CD8-positive, alpha-beta T cell (primary cell): ENCODE measurements at regions of chr6 and their contacts with region 1.

Region 1: DNA sequence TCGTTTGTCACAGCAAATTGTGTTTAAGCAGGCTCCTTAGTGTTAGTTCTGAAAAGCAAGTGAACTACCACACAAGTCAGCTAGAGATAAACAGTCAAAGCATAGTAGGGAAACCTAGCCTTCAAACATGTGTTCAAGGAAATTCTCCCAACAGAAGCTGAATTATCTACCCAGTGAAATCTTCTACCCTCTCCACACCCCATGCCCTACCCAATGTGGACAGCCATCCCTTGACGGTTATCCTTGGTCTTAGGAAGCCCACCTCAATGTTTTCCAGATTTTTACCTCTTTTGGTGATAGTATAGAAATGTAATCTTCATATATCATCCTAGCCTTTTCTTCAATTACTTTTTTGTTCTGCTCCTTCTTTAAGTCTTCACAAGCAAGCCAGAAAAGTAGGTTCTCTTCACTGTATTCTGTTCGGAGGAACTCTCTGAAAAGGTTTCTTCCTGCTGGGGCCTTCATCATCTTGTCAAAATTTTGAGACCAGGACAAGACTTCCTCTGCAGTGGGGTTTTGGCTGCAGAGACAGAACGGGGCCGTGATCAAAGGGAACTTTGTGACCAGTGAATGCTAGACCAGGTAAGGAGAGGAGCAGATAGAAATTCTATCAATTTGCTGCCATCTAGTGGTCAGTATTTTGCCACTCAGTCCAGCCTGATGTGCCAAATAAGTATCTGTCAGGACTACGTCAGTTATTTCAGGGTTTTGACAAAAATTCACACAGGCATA is 21.6 kb upstream of the MTRF1L start:
- DNase-seq: peak in 8 of 9 experiments; percentile 6 to 76 (median 38)
- ATAC-seq: peak; percentile 77
- H3K4me3 ChIP-seq: no peak overlapping the region
- H3K4me3 Mint-ChIP-seq: no peak overlapping the region
- H3K27ac ChIP-seq: no peak overlapping the region
- H3K27ac Mint-ChIP-seq: no peak overlapping the region
- H3K4me1 ChIP-seq: no peaks in the 10 kb centered on the region
- H3K4me1 Mint-ChIP-seq: no peaks in the 10 kb centered on the region
- H3K27me3 ChIP-seq: no peaks in the 10 kb centered on the region
- H3K27me3 Mint-ChIP-seq: peaks cover 22% of the 10 kb centered on the region
- CTCF ChIP-seq: peak; percentile 74

Region 2: DNA sequence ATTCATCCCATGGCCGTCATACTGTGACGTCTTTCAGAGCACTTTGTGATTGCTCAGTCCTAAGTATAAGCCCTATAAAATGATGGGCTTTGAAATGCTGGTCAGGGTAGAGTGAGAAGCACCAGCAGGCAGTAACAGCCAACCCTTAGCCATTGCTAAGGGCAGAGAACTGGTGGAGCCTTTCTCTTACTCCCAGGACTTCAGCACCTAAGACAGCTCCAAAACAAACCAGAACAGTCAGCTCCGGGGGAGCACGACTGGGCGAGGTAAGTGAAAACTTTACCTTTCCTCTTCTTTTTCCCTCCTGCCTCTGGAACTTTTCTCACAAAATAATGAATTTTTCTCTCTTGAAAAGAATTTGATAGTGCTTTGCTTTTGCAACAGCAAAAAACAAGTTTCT is 273.4 kb before region 1 on chr6 and contains the start of gene VIP:
- CTCF ChIA-PET with region 1: no interaction called
- POLR2A ChIA-PET with region 1: no interaction called
- intact Hi-C with region 1: loop called in 1 of 2 experiments (anchors 5 kb)
- DNase-seq: no peak
- ATAC-seq: no peak
- H3K4me3 ChIP-seq: no peak within 1 kb of the TSS
- H3K4me3 Mint-ChIP-seq: no peak within 1 kb of the TSS
- H3K27ac ChIP-seq: no peak within 1 kb of the TSS
- H3K27ac Mint-ChIP-seq: no peak within 1 kb of the TSS
- H3K4me1 ChIP-seq: no peaks in the 10 kb centered on the region
- H3K4me1 Mint-ChIP-seq: no peaks in the 10 kb centered on the region
- H3K27me3 ChIP-seq: no peaks in the 10 kb centered on the region
- H3K27me3 Mint-ChIP-seq: no peaks in the 10 kb centered on the region
- CTCF ChIP-seq: no peak
- total RNA-seq, gene VIP: not detected

Region 3: GRCh38 chr6:152863618-152864326 is 160.4 kb before region 1 on chr6:
- CTCF ChIA-PET with region 1: interaction called, 8 read pairs
- POLR2A ChIA-PET with region 1: no interaction called
- intact Hi-C with region 1: loop called (anchors 1 kb)
- DNase-seq: peak; percentile 10 to 74 (median 67)
- ATAC-seq: peak; percentile 57
- H3K4me3 ChIP-seq: no peak overlapping the region
- H3K4me3 Mint-ChIP-seq: no peak overlapping the region
- H3K27ac ChIP-seq: no peak overlapping the region
- H3K27ac Mint-ChIP-seq: no peak overlapping the region
- H3K4me1 ChIP-seq: no peaks in the 10 kb centered on the region
- H3K4me1 Mint-ChIP-seq: no peaks in the 10 kb centered on the region
- H3K27me3 ChIP-seq: no peaks in the 10 kb centered on the region
- H3K27me3 Mint-ChIP-seq: peaks cover 6% of the 10 kb centered on the region
- CTCF ChIP-seq: peak; percentile 70

Region 4: DNA sequence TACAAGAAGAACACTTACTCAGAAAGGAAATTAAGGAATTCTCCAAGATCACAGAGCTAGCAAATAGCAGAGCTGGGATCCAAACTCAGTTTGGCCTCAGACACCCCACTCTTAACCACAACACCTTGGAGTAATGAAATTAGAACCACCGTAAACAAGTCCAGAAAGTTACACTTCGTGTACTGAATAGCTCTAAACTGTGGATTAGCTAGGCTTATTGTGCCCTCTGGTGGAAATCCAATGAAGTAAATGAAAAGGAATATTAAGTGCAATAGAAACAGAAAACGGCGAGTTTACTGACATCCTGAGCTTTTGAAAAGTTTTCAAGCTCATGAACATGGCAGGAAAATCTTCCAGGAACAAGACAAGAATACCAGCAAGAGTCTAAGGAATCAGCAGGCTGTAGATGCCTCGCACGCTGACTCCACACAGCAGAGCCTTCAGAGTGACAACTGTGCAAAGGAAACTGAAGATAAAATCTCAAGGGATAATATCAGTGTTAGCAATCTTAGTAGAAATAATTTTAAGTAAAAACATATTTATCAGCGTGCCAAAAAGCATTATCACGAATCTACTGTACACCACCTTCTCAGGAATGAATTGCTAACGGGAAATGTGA is 75.9 kb before region 1 on chr6:
- CTCF ChIA-PET with region 1: interaction called, 3 read pairs
- POLR2A ChIA-PET with region 1: no interaction called
- intact Hi-C with region 1: loop called (anchors 1 to 5 kb)
- DNase-seq: peak in 2 of 9 experiments; percentile 44 to 56
- ATAC-seq: peak; percentile 52
- H3K4me3 ChIP-seq: no peak overlapping the region
- H3K4me3 Mint-ChIP-seq: no peak overlapping the region
- H3K27ac ChIP-seq: no peak overlapping the region
- H3K27ac Mint-ChIP-seq: no peak overlapping the region
- H3K4me1 ChIP-seq: no peaks in the 10 kb centered on the region
- H3K4me1 Mint-ChIP-seq: peaks cover 7% of the 10 kb centered on the region
- H3K27me3 ChIP-seq: peaks cover 0 to 9% of the 10 kb centered on the region in 2 experiments
- H3K27me3 Mint-ChIP-seq: peaks cover 23% of the 10 kb centered on the region
- CTCF ChIP-seq: peak; percentile 63

Region 5: DNA sequence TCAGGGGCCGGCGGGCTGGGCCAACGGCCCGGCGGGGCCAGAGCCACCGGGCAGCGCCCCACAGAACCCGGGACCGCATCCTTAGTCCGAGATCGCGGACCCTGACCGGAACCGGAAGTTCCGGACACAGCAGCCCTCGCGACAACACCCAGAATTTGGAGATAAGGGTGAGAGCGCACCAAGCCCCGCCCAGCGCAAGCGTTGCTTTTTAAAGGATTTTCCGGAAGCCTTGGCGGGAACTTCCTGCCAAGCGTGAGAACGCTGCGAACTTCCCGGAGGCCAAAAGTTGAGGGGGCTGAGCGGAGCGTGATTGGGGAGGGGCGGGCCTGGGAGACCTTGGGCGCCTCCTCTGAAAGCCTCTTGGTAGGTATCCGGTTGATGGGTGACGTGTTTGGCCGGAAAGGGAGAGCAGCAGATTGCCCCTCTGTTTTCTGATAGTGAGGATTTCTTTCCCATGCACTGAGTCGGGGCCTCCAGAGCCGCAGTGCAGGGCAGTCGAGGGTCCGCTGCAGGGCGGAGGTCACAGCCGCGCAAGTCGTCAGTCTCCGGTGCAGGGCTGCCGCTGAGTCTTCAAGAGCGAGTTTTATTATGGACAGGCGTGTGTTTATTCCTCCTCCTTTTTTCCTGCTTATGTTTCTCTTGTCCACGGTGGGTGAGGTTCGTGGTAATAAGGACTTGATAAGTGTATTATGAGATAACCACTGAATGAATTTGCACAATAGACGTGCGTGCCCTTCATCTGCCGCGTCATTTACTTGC is 21.4 kb before region 1 on chr6 and contains the start of gene MTRF1L:
- CTCF ChIA-PET with region 1: no interaction called
- POLR2A ChIA-PET with region 1: no interaction called
- intact Hi-C with region 1: loop called in 1 of 2 experiments (anchors 1 kb)
- DNase-seq: peak; percentile 58 to 94 (median 84)
- ATAC-seq: peak; percentile 85
- H3K4me3 ChIP-seq: peak within 1 kb of the TSS; percentile 60 to 69
- H3K4me3 Mint-ChIP-seq: peak within 1 kb of the TSS; percentile 97
- H3K27ac ChIP-seq: peak within 1 kb of the TSS; percentile 63 to 74
- H3K27ac Mint-ChIP-seq: peak within 1 kb of the TSS; percentile 96
- H3K4me1 ChIP-seq: peaks cover 26% of the 10 kb centered on the region
- H3K4me1 Mint-ChIP-seq: peaks cover 52% of the 10 kb centered on the region
- H3K27me3 ChIP-seq: no peaks in the 10 kb centered on the region
- H3K27me3 Mint-ChIP-seq: no peaks in the 10 kb centered on the region
- CTCF ChIP-seq: no peak
- total RNA-seq, gene MTRF1L: 10.5 to 13.4 TPM